Panc1 (cell line): ENCODE measurements at regions of chr19 and their contacts with region 1.

Region 1: DNA sequence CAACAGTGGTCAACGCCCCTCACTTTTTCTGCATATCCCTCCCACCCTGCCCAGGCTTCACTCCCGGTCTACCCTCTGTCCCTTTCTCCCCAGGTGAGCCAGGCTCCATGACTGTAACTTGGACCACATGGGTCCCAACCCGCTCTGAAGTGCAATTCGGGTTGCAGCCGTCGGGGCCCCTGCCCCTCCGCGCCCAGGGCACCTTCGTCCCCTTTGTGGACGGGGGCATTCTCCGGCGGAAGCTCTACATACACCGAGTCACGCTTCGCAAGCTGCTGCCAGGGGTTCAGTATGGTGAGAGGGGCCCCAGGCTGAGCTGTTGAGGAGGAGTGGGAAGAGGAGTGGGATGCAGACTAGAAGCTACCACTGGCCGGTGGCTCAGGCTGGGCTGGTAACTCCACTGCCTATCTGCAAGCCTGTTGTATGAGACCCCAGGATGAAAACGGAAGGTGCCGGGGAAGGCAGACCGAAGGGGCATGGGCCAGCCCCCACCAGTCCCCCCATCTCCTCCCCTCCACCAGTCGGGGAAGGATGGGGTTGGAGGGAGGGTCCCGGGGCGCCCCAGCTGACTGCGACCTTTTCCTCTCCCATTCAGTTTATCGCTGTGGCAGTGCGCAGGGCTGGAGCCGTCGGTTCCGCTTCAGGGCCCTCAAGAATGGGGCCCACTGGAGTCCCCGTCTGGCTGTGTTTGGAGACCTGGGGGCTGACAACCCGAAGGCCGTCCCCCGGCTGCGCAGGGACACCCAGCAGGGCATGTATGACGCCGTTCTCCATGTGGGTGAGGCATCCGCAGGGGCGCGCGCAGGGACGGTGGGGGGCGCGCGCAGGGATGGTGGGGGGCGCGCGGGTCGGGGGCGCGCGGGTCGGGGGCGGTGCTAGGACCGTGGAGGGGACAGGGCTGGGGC is 14.4 kb downstream of the ACP7 start:
- DNase-seq: no peak
- ATAC-seq: peak; percentile 55
- H3K4me3 ChIP-seq: peak overlapping the region; percentile 3 to 29; a peak in 1 of 4 replicates
- H3K27ac ChIP-seq: no peak overlapping the region
- H3K4me1 ChIP-seq: peaks cover 4% of the 10 kb centered on the region; the same call in 1 of the 2 replicates
- H3K27me3 ChIP-seq: no peaks in the 10 kb centered on the region
- CTCF ChIP-seq: no peak

Region 2: GRCh38 chr19:39070888-39071287 is 27.7 kb before region 1 on chr19:
- CTCF ChIA-PET with region 1: no interaction called
- POLR2A ChIA-PET with region 1: interaction called, 30 read pairs
- in situ Hi-C with region 1: no loop called
- intact Hi-C with region 1: no loop called
- DNase-seq: no peak
- ATAC-seq: peak; percentile 37
- H3K4me3 ChIP-seq: no peak overlapping the region
- H3K27ac ChIP-seq: peak overlapping the region; percentile 24
- H3K4me1 ChIP-seq: peaks cover 32% of the 10 kb centered on the region
- H3K27me3 ChIP-seq: no peaks in the 10 kb centered on the region
- CTCF ChIP-seq: no peak

Region 3: GRCh38 chr19:39083983-39084731 is 14.5 kb before region 1 on chr19 and contains the start of gene ACP7:
- CTCF ChIA-PET with region 1: interaction called, 10 read pairs
- POLR2A ChIA-PET with region 1: interaction called, 12 read pairs
- in situ Hi-C with region 1: no loop called
- intact Hi-C with region 1: no loop called
- DNase-seq: no peak
- ATAC-seq: peak; percentile 64
- H3K4me3 ChIP-seq: peak within 1 kb of the TSS; percentile 35 to 72
- H3K27ac ChIP-seq: peak within 1 kb of the TSS; percentile 67
- H3K4me1 ChIP-seq: peaks cover 52% of the 10 kb centered on the region
- H3K27me3 ChIP-seq: no peaks in the 10 kb centered on the region
- CTCF ChIP-seq: no peak
- total RNA-seq, gene ACP7: 10.3 TPM

Region 4: DNA sequence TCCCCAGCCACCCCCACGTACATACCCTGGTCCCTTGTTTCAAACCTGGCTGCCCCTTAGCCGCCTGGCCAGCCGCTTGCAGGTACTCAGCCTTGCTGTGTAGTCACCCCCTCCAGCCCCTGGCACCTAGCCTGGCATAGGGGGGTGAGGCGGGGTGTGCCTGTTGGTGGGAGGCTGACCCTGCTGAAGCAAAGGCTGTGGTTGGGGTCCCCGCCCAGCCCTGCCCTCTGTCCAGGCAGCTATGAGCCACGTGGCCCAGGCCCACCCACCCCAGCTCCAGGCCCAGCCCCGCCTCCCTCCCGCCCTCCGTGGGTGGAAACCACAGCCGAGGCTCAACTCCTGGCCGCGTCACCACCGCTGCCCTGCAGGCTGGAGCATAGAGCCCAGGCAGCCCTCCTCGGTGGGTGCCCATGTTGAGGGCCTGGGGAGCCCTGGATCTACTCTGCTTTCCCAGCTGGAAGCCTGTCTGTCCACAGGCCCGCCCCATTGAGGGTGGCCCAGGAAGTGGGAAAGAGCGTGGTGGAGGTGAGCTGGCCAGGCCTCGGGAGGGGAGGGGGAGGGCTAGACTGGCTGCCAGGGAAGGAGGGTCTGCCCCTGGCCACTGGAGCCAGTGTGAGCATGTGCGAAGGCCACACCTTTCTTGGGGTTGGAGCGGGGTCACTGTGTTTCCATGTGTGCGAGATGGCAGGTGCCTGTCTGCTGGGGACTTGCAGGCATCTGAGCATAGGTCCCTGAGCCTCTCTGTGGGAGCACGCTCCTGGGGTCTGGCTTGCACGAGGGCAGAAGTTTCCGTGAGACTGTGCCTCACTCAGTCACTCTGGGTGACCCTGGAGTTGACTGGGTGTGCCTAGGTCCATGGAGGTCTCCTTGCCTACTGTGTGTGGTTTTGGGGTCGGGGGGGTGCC is 58.0 kb after region 1 on chr19:
- CTCF ChIA-PET with region 1: no interaction called
- POLR2A ChIA-PET with region 1: interaction called, 16 read pairs
- in situ Hi-C with region 1: no loop called
- intact Hi-C with region 1: no loop called
- DNase-seq: no peak
- ATAC-seq: no peak
- H3K4me3 ChIP-seq: no peak overlapping the region
- H3K27ac ChIP-seq: no peak overlapping the region
- H3K4me1 ChIP-seq: peaks cover 66% of the 10 kb centered on the region
- H3K27me3 ChIP-seq: no peaks in the 10 kb centered on the region
- CTCF ChIP-seq: no peak